Activated CD4-positive, alpha-beta T cell treated with anti-CD3 and anti-CD28 coated beads, Interleukin-2, amount 10 ng/mL, durations not matched to agents 24 days and 14 days (primary cell): ENCODE measurements at regions of chr4 and their contacts with region 1.

Region 1: GRCh38 chr4:159102622-159103383 is at the start of gene RAPGEF2:
- DNase-seq: peak; percentile 96
- H3K4me3 Mint-ChIP-seq: peak within 1 kb of the TSS; percentile 81
- H3K27ac Mint-ChIP-seq: peak within 1 kb of the TSS; percentile 87
- H3K4me1 Mint-ChIP-seq: peaks cover 42% of the 10 kb centered on the region
- H3K27me3 Mint-ChIP-seq: peaks cover 2% of the 10 kb centered on the region
- total RNA-seq, gene RAPGEF2: 27.1 and 32.0 TPM in 2 replicates

Region 2: DNA sequence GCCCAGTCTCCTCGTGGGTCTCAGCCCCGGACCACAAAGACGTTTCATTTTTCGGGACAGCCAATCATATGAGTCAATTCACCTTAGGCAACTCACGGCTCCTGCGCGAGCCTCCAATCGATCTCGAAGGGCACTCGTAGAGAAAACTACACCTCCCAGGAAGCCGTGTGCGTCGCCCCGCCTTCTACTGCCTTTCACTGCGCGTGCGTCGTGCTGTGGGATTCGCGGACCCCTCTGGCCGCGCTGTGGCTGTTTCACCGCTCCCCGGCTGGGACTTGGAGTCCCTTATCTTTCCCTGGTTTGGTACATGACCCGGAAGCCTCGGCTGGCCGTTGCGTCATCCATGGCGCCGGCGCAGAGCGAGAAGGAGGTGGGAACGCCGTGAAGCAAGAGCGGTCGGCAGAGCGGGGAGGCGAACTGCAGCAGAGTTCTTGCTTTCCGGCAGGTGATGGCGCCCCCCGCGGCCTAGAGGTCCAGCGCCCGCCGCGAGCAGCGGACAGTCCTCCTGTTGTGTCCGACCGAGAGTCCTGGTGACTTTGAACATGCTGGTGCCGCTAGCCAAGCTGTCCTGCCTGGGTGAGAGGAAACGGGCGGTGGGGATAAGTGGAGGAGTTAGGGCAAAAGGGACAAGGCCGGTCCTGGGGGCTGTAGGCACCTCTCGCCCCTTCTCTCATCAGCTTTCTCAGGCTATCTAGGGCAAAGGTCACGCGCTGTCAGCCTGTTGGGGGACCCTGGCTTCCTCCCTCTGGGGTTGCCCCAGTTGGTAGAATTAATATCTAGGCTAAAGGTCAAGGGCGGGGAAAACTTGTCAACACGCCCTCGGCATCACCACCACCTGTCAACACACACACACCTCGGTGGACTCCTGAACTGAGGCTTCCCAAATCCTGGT is 430.6 kb before region 1 on chr4 and contains the start of gene ETFDH:
- intact Hi-C with region 1: loop called (anchors 1 kb)
- DNase-seq: peak; percentile 99
- H3K4me3 Mint-ChIP-seq: peak within 1 kb of the TSS; percentile 99
- H3K27ac Mint-ChIP-seq: peak within 1 kb of the TSS; percentile 95
- H3K4me1 Mint-ChIP-seq: peaks cover 22% of the 10 kb centered on the region
- H3K27me3 Mint-ChIP-seq: peaks cover 1% of the 10 kb centered on the region
- total RNA-seq, gene ETFDH: 20.8 and 24.7 TPM in 2 replicates

Region 3: DNA sequence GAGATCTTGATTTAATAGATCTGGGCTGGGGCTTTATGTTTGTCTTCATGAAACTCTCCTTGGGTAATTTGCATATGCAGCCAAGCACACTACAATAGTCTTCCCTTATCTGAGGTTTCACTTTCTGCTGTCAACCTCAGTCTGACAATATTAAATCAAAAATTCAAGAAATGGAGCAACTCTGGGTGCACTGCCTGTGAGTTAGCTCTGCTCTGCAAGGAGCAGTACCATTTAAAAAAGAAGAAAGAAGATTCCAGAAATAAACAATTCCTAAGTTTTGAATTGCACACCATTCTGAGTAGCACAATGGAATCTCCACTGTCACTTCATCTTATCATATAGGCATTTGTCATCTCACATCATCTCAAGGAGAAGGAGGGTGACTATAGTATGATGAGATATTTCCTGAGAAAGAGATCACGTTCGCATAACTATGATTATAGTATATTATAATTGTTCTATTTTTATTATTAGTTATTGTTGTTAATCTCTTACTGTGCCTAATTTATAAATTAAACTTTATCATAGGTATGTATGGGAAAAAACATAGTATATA is 324.6 kb before region 1 on chr4:
- intact Hi-C with region 1: loop called (anchors 2 kb)
- DNase-seq: peak; percentile 67
- H3K4me3 Mint-ChIP-seq: peak overlapping the region; percentile 76
- H3K27ac Mint-ChIP-seq: peak overlapping the region; percentile 74
- H3K4me1 Mint-ChIP-seq: peaks cover 42% of the 10 kb centered on the region
- H3K27me3 Mint-ChIP-seq: no peaks in the 10 kb centered on the region

Region 4: DNA sequence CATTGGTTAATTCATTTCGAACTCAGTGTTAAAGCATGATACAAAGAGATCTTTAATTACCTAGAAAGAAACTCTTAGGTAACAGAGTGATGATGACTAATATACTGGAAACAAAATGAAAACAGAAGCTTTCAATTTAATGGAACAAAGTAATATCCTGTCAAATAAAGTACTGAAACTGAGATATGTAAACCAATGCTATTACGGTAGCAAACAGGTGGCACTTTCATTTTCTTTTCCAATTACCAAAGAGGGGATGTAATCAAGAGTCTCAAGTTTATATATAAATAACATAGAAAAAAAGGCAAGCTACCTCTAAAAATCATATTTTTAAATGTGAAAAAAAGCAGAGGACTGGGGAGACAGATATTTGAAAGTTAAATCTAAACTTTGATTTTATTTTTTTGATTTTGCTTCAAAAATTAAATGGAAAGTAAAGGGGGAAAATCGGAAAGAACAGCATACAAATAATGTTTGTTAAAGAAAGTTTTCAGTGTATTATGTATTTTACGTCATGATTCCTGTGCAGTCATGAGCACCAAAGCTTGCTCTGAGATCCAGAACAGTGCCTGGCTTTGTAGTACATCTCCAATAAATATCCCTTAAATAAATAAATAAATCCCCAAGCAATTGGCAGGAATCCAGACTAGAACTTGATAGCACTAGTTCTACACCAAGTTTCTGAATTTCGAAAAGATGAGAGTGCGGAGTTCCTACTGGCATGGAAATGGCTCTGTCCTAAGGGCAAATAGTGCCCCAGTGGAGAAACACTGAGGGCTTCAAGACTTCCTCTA is 24.9 kb before region 1 on chr4:
- intact Hi-C with region 1: loop called (anchors 1 kb)
- DNase-seq: no peak
- H3K4me3 Mint-ChIP-seq: peak overlapping the region; percentile 16
- H3K27ac Mint-ChIP-seq: peak overlapping the region; percentile 6
- H3K4me1 Mint-ChIP-seq: peaks cover 10% of the 10 kb centered on the region
- H3K27me3 Mint-ChIP-seq: no peaks in the 10 kb centered on the region

Region 5: DNA sequence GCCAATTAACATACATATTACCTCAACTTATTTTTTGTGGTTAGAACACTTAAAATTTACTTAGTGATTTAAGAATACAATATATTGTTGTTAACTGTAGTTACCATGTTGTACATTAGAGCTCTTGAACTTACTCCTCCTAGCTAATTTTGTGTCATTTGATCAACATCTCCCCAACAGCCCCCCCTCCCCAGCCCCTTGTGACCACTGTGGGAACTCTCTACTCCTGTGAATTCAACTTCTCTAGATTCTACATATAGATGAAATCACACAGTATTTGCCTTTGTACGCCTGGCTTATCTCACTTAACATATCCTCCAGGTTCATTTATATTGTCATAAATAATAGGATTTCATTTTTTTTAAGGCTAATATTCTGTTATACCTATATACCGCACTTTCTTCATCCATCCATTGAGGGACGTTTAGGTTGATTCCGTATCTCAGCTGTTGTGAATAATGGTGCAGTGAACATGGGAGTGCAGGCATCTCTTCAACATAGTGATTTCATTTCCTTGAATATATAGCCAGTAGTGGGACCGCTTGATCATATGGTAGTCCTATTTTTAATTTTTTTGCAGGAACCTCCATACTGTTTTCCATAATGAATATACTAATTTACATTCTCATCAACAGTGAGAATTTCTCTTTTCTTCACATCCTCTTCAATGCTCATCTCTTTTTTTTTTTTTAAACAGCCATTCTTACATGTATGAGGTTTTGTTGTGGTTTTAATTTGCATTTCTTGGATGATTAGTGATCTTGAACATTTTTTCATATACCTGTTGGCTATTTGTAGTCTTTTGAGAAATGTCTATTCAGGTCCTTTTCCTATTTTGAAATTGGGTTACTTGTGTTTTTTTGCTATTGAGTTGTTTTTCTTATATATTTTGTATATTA is 66.8 kb after region 1 on chr4:
- intact Hi-C with region 1: loop called (anchors 2 kb)
- DNase-seq: no peak
- H3K4me3 Mint-ChIP-seq: no peak overlapping the region
- H3K27ac Mint-ChIP-seq: no peak overlapping the region
- H3K4me1 Mint-ChIP-seq: peaks cover 27% of the 10 kb centered on the region
- H3K27me3 Mint-ChIP-seq: no peaks in the 10 kb centered on the region

Region 6: DNA sequence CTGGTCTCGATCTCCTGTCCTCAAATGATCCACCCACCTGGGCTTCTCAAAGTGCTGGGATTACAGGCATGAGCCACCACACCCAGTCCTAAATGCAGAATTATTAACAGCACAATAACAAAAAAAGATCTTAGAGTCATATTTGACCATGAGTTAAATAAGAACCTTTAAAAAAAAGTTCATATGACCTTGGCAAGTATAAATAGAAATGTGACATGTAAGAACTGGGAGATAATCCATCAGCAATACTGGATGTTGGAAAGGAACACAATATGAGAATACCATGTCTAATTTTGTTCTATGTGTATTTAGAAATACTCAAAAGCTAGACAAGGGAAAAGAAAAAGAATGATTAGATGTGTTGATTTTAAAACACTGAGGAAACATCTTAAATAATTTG is 231.7 kb after region 1 on chr4:
- intact Hi-C with region 1: no loop called
- DNase-seq: no peak
- H3K4me3 Mint-ChIP-seq: no peak overlapping the region
- H3K27ac Mint-ChIP-seq: no peak overlapping the region
- H3K4me1 Mint-ChIP-seq: no peaks in the 10 kb centered on the region
- H3K27me3 Mint-ChIP-seq: no peaks in the 10 kb centered on the region